Transverse colon (tissue), 4 donors: ENCODE measurements at regions of chr20 and their contacts with region 1.

Region 1: GRCh38 chr20:52076164-52076563 is 115.4 kb downstream of the ZFP64 start:
- DNase-seq: no peak
- H3K4me3 ChIP-seq: no peak overlapping the region
- H3K27ac ChIP-seq: no peak overlapping the region
- H3K4me1 ChIP-seq: no peaks in the 10 kb centered on the region
- H3K27me3 ChIP-seq: no peaks in the 10 kb centered on the region
- CTCF ChIP-seq: no peak
- EP300 ChIP-seq: no peak
- POLR2A ChIP-seq: no peak

Region 2: DNA sequence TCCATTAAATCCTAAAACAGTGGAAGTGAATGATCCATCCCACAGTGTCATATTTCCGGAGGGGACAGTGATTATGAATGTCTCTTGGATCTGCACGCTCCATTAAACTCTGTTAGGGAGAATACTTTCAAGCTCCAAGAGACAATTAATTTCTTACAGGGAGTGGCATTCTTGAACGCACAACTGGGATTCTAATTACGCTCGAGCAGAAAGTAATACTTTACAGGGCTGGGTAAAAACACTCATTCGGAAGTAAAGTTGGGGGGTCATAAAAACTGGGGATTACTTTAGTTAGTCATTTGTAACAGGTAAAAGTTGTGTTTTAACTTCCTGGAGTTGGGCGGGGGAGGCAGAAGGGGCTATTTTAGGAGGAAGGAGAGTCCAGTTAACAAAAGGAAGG is 36.4 kb before region 1 on chr20:
- in situ Hi-C with region 1: no loop called
- intact Hi-C with region 1: loop called (anchors 1 kb)
- DNase-seq: no peak
- H3K4me3 ChIP-seq: no peak overlapping the region
- H3K27ac ChIP-seq: no peak overlapping the region
- H3K4me1 ChIP-seq: peaks cover 0 to 5% (median 0%) of the 10 kb centered on the region in 4 donors
- H3K27me3 ChIP-seq: no peaks in the 10 kb centered on the region
- CTCF ChIP-seq: no peak
- EP300 ChIP-seq: no peak
- POLR2A ChIP-seq: no peak